ENCODE measurements at regions of chr7 and their contacts with region 1.

Region 1: GRCh38 chr7:54439391-54439790 is 102.8 kb upstream of the VSTM2A start:
- DNase-seq: no peak
- H3K4me3 Mint-ChIP-seq: no peak overlapping the region
- H3K27ac Mint-ChIP-seq: no peak overlapping the region
- H3K4me1 Mint-ChIP-seq: no peaks in the 10 kb centered on the region
- H3K27me3 Mint-ChIP-seq: no peaks in the 10 kb centered on the region

Region 2: GRCh38 chr7:54278847-54279246 is 160.5 kb before region 1 on chr7:
- CTCF ChIA-PET with region 1: no interaction called
- intact Hi-C with region 1: no loop called
- DNase-seq: no peak
- H3K4me3 Mint-ChIP-seq: no peak overlapping the region
- H3K27ac Mint-ChIP-seq: no peak overlapping the region
- H3K4me1 Mint-ChIP-seq: no peaks in the 10 kb centered on the region
- H3K27me3 Mint-ChIP-seq: no peaks in the 10 kb centered on the region

Region 3: GRCh38 chr7:54483523-54483922 is 44.1 kb after region 1 on chr7:
- CTCF ChIA-PET with region 1: no interaction called
- intact Hi-C with region 1: loop called (anchors 10 kb)
- DNase-seq: no peak
- H3K4me3 Mint-ChIP-seq: no peak overlapping the region
- H3K27ac Mint-ChIP-seq: no peak overlapping the region
- H3K4me1 Mint-ChIP-seq: no peaks in the 10 kb centered on the region
- H3K27me3 Mint-ChIP-seq: no peaks in the 10 kb centered on the region

Region 4: DNA sequence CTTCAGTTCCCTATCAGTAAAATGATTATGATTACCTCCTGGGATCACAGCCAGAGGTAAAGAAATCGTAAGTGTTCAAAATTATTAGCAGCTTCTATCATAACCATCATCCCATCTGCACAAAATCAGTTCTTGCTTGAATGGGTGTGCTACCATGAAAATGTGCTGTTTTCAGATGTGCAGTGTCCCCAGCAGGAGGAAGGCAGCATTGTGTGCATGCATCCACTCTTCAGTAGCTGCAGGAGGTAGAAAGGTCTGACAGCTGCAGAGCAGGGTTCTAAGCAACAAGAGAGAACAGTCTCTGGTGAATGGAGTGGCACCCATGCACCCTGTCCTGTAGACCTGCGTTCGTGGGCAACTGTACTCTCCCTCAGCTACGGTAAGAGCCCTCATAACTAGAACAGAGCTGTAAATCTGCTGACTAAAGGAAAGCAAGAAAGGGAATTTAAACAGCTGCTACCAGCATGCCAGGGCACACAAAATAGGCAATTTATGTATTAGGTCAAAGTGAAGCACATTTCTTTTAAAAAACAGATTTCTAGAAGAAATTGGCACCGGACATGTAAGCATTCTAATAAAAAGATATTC is 124.0 kb after region 1 on chr7:
- CTCF ChIA-PET with region 1: no interaction called
- intact Hi-C with region 1: no loop called
- DNase-seq: no peak
- H3K4me3 Mint-ChIP-seq: no peak overlapping the region
- H3K27ac Mint-ChIP-seq: no peak overlapping the region
- H3K4me1 Mint-ChIP-seq: no peaks in the 10 kb centered on the region
- H3K27me3 Mint-ChIP-seq: no peaks in the 10 kb centered on the region

Measured in activated naive CD4-positive, alpha-beta T cell treated with anti-CD3 and anti-CD28 coated beads for 36 hours (primary cell).